Dendritic cell treated with granulocyte-macrophage colony-stimulating factor and Interleukin-4, amounts not matched to agents 40 ng/mL and 50 ng/mL, for 4 days (primary cell): ENCODE measurements at regions of chr6 and their contacts with region 1.

Region 1: DNA sequence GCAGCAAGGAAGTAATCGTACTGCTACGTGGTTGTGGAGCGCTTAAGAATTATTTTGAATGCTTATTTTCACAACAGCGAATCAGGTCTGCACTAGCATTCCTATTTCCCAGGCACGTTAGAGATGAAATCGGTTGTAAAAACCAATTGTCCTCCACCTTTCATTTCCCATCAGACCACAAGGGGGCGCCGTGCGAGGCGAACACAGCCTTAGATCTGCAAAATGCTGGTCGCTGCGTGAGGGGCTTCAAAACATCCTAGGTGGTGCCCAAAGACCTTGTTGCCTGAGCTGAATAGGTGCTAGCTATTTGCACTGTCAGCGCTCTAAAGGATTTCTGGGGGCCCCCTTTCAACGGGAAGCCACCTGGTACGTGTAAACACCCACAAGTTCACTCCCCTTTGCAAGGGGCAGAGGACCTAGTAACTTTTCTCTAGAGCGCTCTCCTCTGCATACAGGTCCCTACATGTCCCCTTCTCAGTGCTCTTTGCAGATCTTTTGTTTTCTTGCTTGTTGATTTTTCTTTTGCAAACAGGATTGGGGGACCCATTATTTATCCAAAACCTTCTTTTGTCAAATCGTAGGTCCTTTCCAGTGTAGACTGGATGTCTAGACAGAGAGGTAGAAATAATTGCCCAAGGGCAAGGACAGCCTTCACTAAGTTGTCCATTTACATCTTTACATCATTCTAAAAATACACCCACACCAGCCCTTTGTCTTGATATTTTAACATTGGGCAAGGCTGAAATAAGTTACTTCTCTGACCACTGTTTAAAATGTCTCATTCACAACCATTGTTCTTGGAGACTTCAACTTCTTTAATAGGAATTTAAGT is 59.8 kb downstream of the NEDD9 start:
- H3K4me3 Mint-ChIP-seq: no peak overlapping the region
- H3K27ac Mint-ChIP-seq: no peak overlapping the region
- H3K4me1 Mint-ChIP-seq: peaks cover 18% of the 10 kb centered on the region
- H3K27me3 Mint-ChIP-seq: peaks cover 6% of the 10 kb centered on the region

Region 2: DNA sequence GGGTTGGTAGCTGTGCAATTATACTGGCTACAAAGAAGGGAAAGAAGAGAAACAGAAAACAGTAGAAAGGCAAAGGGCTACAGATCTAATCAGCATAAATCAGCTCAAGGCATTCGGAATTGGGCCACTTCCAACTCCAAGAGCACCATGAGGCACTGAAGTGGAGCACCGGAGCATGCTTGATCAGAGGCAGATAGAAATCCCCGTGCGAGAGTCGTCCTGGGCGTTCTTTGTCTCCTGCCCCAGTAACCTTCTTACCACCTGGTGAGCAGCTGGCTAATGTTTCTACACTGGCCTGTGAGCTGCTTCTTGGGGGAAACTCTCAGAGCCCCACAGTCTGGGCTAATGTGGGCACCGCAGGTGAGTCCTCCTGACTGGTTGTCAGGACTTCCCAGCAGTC is 43.1 kb after region 1 on chr6:
- intact Hi-C with region 1: no loop called
- H3K4me3 Mint-ChIP-seq: no peak overlapping the region
- H3K27ac Mint-ChIP-seq: no peak overlapping the region
- H3K4me1 Mint-ChIP-seq: peaks cover 50% of the 10 kb centered on the region
- H3K27me3 Mint-ChIP-seq: peaks cover 18% of the 10 kb centered on the region

Region 3: GRCh38 chr6:11232193-11232769 is 59.6 kb after region 1 on chr6 and contains the start of gene NEDD9:
- intact Hi-C with region 1: loop called (anchors 5 kb)
- H3K4me3 Mint-ChIP-seq: peak within 1 kb of the TSS; percentile 87
- H3K27ac Mint-ChIP-seq: peak within 1 kb of the TSS; percentile 94
- H3K4me1 Mint-ChIP-seq: peaks cover 38% of the 10 kb centered on the region
- H3K27me3 Mint-ChIP-seq: peaks cover 6% of the 10 kb centered on the region